GM12878 (cell line): ENCODE measurements at regions of chr1 and their contacts with region 1.

Region 1: GRCh38 chr1:152912900-152913299 is 4.6 kb downstream of the IVL start:
- DNase-seq: no peak
- ATAC-seq: peak; percentile 57
- H3K4me3 ChIP-seq: no peak overlapping the region
- H3K27ac ChIP-seq: no peak overlapping the region
- H3K4me1 ChIP-seq: peaks cover 5% of the 10 kb centered on the region
- H3K27me3 ChIP-seq: no peaks in the 10 kb centered on the region
- CTCF ChIP-seq: no peak
- EP300 ChIP-seq: no peak
- POLR2A ChIP-seq: no peak
- RAD21 ChIP-seq: no peak

Region 2: DNA sequence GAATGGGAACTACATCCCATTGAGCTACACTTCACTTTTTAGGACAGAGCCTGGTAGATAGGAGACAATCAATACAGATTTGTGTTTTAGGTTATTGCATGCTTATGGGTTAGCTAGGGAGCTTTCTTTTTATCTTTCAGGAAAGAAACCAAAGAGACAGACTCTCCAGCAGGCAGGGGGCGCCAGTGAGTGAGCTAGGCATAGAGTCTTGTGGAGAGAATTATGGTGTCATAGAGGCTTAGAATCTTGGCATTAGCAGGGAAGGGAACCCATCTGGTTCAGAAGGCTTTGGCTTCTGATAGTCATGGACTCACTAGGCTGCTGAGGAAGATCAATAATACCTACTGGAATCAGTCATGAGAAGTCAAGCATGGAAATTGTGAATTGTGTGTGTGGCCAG is 34.9 kb before region 1 on chr1 and contains the start of gene SMCP:
- CTCF ChIA-PET with region 1: interaction called, 22 read pairs
- POLR2A ChIA-PET with region 1: interaction called, 5 read pairs
- RAD21 ChIA-PET with region 1: interaction called, 4 read pairs
- SMC1A ChIA-PET with region 1: interaction called, 5 read pairs
- in situ Hi-C with region 1: no loop called
- intact Hi-C with region 1: no loop called
- DNase-seq: no peak
- ATAC-seq: no peak
- H3K4me3 ChIP-seq: no peak within 1 kb of the TSS
- H3K27ac ChIP-seq: no peak within 1 kb of the TSS
- H3K4me1 ChIP-seq: peaks cover 20% of the 10 kb centered on the region
- H3K27me3 ChIP-seq: no peaks in the 10 kb centered on the region
- CTCF ChIP-seq: peak; percentile 12 to 59 (median 14); a peak in 3 of 6 replicates
- EP300 ChIP-seq: no peak
- POLR2A ChIP-seq: no peak
- RAD21 ChIP-seq: peak; percentile 44
- polyA plus RNA-seq, gene SMCP: 0.27 to 0.69 TPM

Region 3: DNA sequence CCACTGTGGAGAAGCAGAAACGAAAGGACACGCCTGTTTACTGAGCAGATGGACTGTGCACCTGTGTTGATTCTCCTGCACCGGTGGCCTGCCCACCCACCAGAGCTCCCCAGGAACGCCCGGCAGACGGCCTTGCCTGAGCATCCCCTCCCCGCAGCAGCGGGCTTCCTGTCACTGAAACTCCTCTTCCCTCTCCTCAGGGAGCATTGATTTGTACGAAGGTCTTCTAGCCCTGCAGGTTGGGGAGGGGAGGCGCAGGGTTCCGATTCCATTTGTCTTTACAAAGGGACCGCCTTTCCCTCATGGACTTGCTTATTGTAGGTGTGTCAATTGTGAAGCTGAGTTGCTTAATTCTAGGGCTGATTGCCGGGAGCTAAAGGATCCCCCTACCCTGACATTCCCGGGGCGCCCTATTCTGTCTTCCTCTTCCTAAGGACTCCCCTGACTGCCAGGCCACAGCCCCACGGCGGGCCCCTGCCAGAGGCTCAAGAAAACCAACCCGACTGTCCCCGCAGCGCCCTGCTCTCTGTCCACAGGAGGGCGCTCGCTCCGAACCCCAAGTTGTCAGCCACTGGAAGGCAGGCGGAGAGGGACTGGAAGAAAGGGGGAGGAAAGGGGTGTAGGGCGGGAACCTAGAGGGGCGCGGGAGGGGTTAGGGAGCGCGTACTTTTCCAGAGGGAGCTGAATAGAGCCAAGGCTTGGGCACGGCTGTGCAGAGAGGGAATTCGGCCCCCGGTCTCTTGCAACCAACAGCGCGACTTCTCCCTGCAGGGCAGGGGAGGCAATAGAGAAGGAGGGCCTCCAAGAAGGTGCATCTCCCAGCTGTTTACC is 620.1 kb after region 1 on chr1:
- CTCF ChIA-PET with region 1: no interaction called
- POLR2A ChIA-PET with region 1: no interaction called
- RAD21 ChIA-PET with region 1: no interaction called
- SMC1A ChIA-PET with region 1: no interaction called
- in situ Hi-C with region 1: no loop called
- intact Hi-C with region 1: no loop called
- DNase-seq: no peak
- ATAC-seq: peak; percentile 51
- H3K4me3 ChIP-seq: no peak overlapping the region
- H3K27ac ChIP-seq: no peak overlapping the region
- H3K4me1 ChIP-seq: peaks cover 12% of the 10 kb centered on the region
- H3K27me3 ChIP-seq: no peaks in the 10 kb centered on the region
- CTCF ChIP-seq: peak; percentile 73 to 86 (median 73)
- EP300 ChIP-seq: no peak
- POLR2A ChIP-seq: no peak
- RAD21 ChIP-seq: peak; percentile 74